ENCODE measurements at regions of chr9 and their contacts with region 1.

Region 1: DNA sequence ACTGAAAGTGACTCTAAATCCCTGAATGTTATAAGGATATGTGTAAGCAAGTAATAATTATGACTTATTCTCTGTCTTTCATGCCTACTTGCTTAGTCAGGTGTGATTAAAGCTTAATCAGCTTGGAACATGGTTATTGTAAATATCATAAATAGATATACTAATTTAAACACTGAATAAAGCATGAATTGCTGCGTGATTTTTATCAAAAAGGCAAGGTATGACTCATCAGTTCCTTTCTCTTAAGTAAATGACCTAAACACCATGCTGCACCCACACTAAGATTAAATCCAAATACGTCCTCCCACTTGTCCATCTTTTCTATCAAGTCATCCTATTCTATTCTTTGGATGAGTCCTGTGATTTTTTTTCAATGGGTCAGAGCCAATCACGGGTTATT is 124.6 kb upstream of the MTAP start:
- DNase-seq: no peak
- H3K4me3 ChIP-seq: no peak overlapping the region
- H3K4me3 Mint-ChIP-seq: no peak overlapping the region
- H3K27ac ChIP-seq: no peak overlapping the region
- H3K27ac Mint-ChIP-seq: no peak overlapping the region
- H3K4me1 ChIP-seq: peaks cover 5% of the 10 kb centered on the region
- H3K4me1 Mint-ChIP-seq: peaks cover 0 to 7% (median under 1%) of the 10 kb centered on the region in 4 donors
- H3K27me3 ChIP-seq: no peaks in the 10 kb centered on the region
- H3K27me3 Mint-ChIP-seq: peaks cover 2 to 3% of the 10 kb centered on the region in 2 donors

Region 2: DNA sequence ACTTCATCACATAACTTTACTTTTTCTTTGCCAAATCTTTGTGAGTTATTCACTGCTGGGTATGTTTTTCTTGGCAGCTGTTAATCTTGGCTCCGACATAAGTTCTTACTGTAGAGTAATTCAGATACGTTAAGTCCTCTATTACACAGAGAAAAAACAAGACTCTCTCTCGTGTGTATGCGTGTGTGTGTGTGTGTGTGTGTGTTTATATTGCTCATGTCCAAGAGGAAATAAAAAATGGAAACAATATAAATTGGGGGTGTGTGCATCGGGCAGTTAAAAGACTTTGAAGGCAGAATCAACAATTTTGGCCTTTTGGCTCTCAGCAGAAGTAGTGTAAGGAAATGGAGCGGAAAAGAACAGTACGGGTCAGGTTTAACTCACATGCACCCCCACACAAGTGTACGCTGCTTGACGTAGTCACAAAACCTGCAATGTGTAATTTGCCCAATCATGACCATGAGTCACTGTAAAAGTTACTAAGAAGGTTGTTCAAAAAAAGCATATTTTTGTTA is 128.5 kb before region 1 on chr9:
- CTCF ChIA-PET with region 1: no interaction called
- POLR2A ChIA-PET with region 1: no interaction called
- intact Hi-C with region 1: no loop called
- DNase-seq: no peak
- H3K4me3 ChIP-seq: no peak overlapping the region
- H3K4me3 Mint-ChIP-seq: peak overlapping the region in 1 of 8 donors; percentile 39
- H3K27ac ChIP-seq: no peak overlapping the region
- H3K27ac Mint-ChIP-seq: no peak overlapping the region
- H3K4me1 ChIP-seq: no peaks in the 10 kb centered on the region
- H3K4me1 Mint-ChIP-seq: peaks cover 1 to 7% (median 5%) of the 10 kb centered on the region in 4 donors
- H3K27me3 ChIP-seq: no peaks in the 10 kb centered on the region
- H3K27me3 Mint-ChIP-seq: peaks cover 5 to 6% of the 10 kb centered on the region in 2 donors

Region 3: DNA sequence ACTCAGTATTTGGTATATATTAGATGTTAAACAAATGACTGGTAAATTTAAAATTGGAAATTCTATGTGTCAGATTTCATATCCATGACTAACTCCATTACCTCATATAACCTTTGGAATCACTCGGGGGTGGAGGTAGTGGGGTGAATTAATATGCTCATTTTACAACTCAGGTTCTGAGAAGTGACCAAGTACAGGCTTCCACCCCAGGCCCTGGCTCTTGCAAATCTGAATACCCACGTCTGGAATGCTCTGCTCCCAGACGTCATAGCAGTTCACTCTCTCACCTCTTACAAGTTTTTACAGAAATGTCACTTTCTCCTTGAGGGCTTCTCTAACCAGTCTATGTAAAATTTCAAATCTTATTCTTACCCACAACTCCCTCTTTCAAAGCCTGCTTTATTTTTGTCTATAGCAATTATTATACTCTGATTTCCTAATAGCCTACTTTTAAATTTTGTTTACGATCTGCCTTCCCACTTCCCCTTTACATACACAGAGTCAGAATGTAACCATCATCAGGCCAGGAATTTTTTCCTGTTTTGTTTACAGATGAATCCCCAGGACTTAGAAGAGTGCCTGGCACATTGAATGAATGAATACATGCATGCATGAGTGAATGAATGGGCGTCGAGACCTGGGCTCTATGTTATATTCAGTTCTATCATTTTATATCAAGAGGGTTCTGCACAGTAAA is 61.6 kb before region 1 on chr9:
- CTCF ChIA-PET with region 1: no interaction called
- POLR2A ChIA-PET with region 1: no interaction called
- intact Hi-C with region 1: loop called (anchors 10 kb)
- DNase-seq: no peak
- H3K4me3 ChIP-seq: no peak overlapping the region
- H3K4me3 Mint-ChIP-seq: no peak overlapping the region
- H3K27ac ChIP-seq: no peak overlapping the region
- H3K27ac Mint-ChIP-seq: no peak overlapping the region
- H3K4me1 ChIP-seq: peaks cover 29% of the 10 kb centered on the region
- H3K4me1 Mint-ChIP-seq: peaks cover 14 to 36% (median 22%) of the 10 kb centered on the region in 4 donors
- H3K27me3 ChIP-seq: no peaks in the 10 kb centered on the region
- H3K27me3 Mint-ChIP-seq: peaks cover 0 to 3% of the 10 kb centered on the region in 2 donors

Measured in CD4-positive, alpha-beta memory T cell (primary cell).